HEK293 (cell line): ENCODE measurements at regions of chr6 and their contacts with region 1.

Region 1: GRCh38 chr6:24855395-24856245 is 56.9 kb upstream of the ARMH2 start:
- H3K4me3 ChIP-seq: no peak overlapping the region
- H3K27ac ChIP-seq: no peak overlapping the region
- H3K4me1 ChIP-seq: no peaks in the 10 kb centered on the region
- CTCF ChIP-seq: peak; percentile 67; the same call in 1 of the 2 replicates

Region 2: GRCh38 chr6:24408719-24409410 is 446.8 kb before region 1 on chr6:
- CTCF ChIA-PET with region 1: no interaction called
- POLR2A ChIA-PET with region 1: no interaction called
- H3K4me3 ChIP-seq: no peak overlapping the region
- H3K27ac ChIP-seq: no peak overlapping the region
- H3K4me1 ChIP-seq: no peaks in the 10 kb centered on the region
- CTCF ChIP-seq: no peak

Region 3: GRCh38 chr6:24872779-24873178 is 17.2 kb after region 1 on chr6:
- CTCF ChIA-PET with region 1: interaction called, 13 read pairs
- POLR2A ChIA-PET with region 1: no interaction called
- H3K4me3 ChIP-seq: no peak overlapping the region
- H3K27ac ChIP-seq: no peak overlapping the region
- H3K4me1 ChIP-seq: no peaks in the 10 kb centered on the region
- CTCF ChIP-seq: no peak

Region 4: GRCh38 chr6:25017932-25018567 is 162.4 kb after region 1 on chr6:
- CTCF ChIA-PET with region 1: interaction called, 27 read pairs
- POLR2A ChIA-PET with region 1: no interaction called
- H3K4me3 ChIP-seq: no peak overlapping the region
- H3K27ac ChIP-seq: no peak overlapping the region
- H3K4me1 ChIP-seq: no peaks in the 10 kb centered on the region
- CTCF ChIP-seq: no peak; the same call in 1 of the 2 replicates

Region 5: DNA sequence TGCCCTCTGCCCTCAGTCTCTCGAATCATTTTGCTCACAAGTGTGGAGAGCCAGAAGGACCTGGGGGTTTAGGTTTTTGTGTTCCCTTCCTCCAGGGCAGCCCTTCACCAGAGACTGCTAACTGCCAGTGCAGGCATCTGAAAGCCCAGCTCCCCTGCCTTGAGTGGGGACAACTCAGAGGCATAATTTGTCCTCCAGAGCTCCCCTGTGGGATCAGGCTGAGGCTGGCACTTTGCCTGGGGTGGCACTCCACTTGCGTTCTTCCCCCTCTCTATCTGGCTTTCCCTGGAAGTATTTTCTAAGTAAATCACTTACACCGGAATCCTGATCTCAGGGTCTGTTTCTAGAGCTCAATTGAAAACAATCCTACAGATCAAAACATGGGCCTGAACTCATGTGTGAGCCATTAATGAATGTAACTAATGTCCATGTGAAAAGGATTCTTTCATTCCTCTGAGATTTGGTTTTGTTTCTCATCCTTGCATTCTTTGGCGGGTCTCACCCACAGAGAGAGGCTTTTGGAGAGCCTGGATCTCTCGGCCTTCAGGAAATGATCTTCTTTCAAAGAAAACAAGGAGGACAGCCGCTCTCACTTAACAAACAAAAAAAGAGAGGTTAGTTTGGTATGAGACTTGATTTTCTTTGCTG is 205.8 kb after region 1 on chr6:
- CTCF ChIA-PET with region 1: interaction called, 13 read pairs
- POLR2A ChIA-PET with region 1: no interaction called
- H3K4me3 ChIP-seq: no peak overlapping the region
- H3K27ac ChIP-seq: no peak overlapping the region
- H3K4me1 ChIP-seq: no peaks in the 10 kb centered on the region
- CTCF ChIP-seq: no peak

Region 6: GRCh38 chr6:25250878-25251277 is 395.3 kb after region 1 on chr6:
- CTCF ChIA-PET with region 1: no interaction called
- POLR2A ChIA-PET with region 1: no interaction called
- H3K4me3 ChIP-seq: no peak overlapping the region
- H3K27ac ChIP-seq: no peak overlapping the region
- H3K4me1 ChIP-seq: peaks cover 17% of the 10 kb centered on the region; the same call in 1 of the 2 replicates
- CTCF ChIP-seq: no peak